Breast epithelium (tissue), 4 donors: ENCODE measurements at regions of chr6 and their contacts with region 1.

Region 1: GRCh38 chr6:43570876-43571441 is 4.9 kb downstream of the XPO5 start:
- DNase-seq: no peak
- H3K4me3 ChIP-seq: no peak overlapping the region
- H3K27ac ChIP-seq: no peak overlapping the region
- H3K4me1 ChIP-seq: peaks cover 4 to 7% of the 10 kb centered on the region in 2 donors
- H3K27me3 ChIP-seq: no peaks in the 10 kb centered on the region
- CTCF ChIP-seq: no peak
- POLR2A ChIP-seq: no peak

Region 2: GRCh38 chr6:42332916-42333315 is 1238.0 kb before region 1 on chr6:
- intact Hi-C with region 1: loop called (anchors 5 kb)
- DNase-seq: no peak
- H3K4me3 ChIP-seq: no peak overlapping the region
- H3K27ac ChIP-seq: no peak overlapping the region
- H3K4me1 ChIP-seq: no peaks in the 10 kb centered on the region
- H3K27me3 ChIP-seq: no peaks in the 10 kb centered on the region
- CTCF ChIP-seq: no peak
- POLR2A ChIP-seq: no peak

Region 3: DNA sequence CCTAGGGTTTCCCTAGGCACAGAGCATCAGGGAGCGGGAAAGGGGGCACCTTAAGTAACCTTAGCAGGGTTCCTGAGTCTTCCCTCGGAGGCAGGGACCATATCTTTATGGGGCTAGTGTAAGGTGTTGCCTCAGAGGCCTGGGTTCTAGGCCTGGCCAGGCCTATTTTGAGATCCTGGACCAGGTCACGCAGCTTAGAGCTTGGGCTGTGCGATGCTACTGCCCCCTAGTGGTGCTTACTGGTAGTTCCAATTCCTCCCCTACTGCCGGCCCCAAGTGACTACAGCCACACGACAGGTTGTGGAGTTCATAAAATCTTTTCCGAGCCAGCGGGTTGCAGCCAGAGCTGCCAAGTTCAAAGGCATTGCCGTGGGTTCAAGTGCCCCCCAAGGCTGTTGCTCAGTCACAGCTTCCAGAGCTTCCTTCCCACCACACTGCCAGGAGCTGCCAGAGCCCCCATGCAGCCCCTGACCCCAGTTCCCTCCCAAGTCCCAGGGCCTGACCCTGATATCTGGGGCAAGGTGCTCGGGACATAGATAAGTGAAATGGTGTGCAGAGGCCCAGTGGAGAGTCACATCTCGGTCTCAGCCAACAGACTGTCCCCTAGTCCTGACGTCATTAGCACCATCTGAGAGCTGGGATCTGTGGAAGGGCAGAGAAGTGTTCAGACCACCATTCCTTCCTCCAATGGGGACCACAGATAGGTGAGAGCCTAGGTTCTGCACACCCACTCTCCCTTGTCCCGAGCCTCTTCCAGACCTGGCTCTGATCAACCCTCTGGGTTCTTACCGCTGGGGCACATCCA is 64.1 kb before region 1 on chr6:
- intact Hi-C with region 1: no loop called
- DNase-seq: peak; percentile 61 to 78
- H3K4me3 ChIP-seq: no peak overlapping the region
- H3K27ac ChIP-seq: peak overlapping the region in 1 of 2 donors; percentile 40
- H3K4me1 ChIP-seq: no peaks in the 10 kb centered on the region
- H3K27me3 ChIP-seq: no peaks in the 10 kb centered on the region
- CTCF ChIP-seq: peak; percentile 84 to 96 (median 92)
- POLR2A ChIP-seq: no peak

Region 4: DNA sequence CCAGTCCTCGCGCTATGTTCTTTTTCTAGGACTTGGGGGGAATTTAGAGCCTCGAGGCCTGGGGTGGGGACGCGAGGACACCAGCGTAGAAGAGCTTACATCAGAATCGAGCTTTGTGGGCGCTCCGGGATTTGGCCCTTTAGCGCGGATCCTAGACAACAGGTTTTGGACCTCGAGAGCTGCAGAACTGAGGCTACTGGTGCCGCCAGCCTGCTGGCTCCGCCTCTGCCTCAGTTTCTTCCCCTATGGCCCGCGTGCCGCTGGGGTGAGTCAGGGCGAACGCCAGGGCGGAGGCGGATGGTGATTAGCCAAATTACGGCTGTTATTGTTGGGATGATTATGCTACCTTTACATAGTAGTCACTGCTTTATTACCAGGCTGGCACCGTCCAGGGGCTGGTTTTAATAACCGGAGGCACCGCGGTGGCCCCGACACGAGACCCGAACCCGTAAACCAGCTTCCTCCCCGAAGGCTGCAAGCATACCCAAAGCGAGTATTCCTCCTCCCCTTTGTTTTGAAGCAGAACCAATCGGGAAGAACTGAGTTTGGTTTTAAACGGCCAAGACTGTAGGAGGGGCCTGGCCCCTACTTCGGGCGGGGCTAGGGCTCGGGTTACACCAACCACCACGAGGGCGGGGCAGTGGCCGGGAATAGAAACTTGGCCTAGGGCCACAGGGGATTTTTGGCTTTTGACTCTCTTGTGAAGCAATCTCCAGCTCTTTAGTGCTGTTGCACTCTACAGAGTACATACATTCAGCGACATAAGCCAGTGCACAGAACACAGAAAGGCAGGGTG is 58.7 kb after region 1 on chr6:
- intact Hi-C with region 1: loop called (anchors 2 kb)
- DNase-seq: peak; percentile 95 to 97
- H3K4me3 ChIP-seq: peak overlapping the region; percentile 90 to 99 (median 95)
- H3K27ac ChIP-seq: peak overlapping the region; percentile 98
- H3K4me1 ChIP-seq: peaks cover 4% of the 10 kb centered on the region in 2 donors
- H3K27me3 ChIP-seq: no peaks in the 10 kb centered on the region
- CTCF ChIP-seq: no peak
- POLR2A ChIP-seq: no peak